ENCODE measurements at regions of chr10 and their contacts with region 1.

Region 1: DNA sequence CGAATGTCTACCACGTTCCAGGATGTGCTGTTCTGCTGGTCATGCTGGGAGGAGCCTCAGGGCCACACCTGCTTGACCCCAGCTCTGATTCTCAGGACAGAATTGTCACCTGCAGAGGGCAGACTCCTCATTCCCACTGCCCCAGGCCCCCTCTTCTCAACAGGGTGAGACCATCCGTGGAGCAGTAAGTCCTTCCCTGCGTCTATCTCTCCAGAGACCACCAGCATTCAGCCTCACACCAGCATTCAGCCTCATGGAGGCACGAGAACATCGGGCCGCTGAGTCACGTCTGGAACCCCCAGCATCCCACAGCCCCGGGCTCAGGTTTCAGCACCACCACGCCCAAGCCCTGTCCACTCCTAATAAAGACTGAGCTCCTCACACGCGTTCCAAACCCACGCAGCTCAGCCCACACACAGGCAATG is 273.4 kb downstream of the DIP2C start:
- DNase-seq: no peak
- H3K4me3 ChIP-seq: no peak overlapping the region
- H3K27ac ChIP-seq: no peak overlapping the region
- H3K4me1 ChIP-seq: no peaks in the 10 kb centered on the region
- H3K27me3 ChIP-seq: no peaks in the 10 kb centered on the region
- CTCF ChIP-seq: peak; percentile 61 to 77 (median 77)
- EP300 ChIP-seq: no peak
- POLR2A ChIP-seq: no peak
- RAD21 ChIP-seq: peak; percentile 75 to 78

Region 2: GRCh38 chr10:397321-398075 is 18.6 kb before region 1 on chr10:
- CTCF ChIA-PET with region 1: interaction called, 11 read pairs
- POLR2A ChIA-PET with region 1: no interaction called
- DNase-seq: no peak
- H3K4me3 ChIP-seq: no peak overlapping the region
- H3K27ac ChIP-seq: no peak overlapping the region
- H3K4me1 ChIP-seq: peaks cover 0 to 11% (median 6%) of the 10 kb centered on the region in 4 experiments; a peak in 6 of 7 replicates
- H3K27me3 ChIP-seq: no peaks in the 10 kb centered on the region
- CTCF ChIP-seq: no peak
- EP300 ChIP-seq: no peak
- POLR2A ChIP-seq: no peak
- RAD21 ChIP-seq: no peak

Region 3: DNA sequence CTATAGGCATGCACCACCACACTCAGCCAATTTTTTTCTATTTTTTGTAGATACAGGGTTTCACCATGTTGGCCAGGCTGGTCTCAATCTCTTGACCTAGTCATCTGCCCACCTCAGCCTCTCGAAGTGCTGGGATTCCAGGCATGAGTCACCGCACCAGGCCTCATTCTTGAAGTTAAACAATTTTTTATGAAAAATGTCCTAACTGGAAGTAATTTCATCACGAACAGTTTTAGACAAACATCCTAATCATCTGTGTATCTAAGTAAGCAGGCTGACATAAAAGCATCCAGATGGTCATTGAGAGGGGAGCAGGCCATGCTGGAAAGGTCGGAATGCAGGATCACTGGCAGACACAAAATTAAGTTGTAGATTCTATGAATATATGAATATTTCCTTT is 11.8 kb before region 1 on chr10:
- CTCF ChIA-PET with region 1: interaction called, 11 read pairs
- POLR2A ChIA-PET with region 1: no interaction called
- DNase-seq: no peak
- H3K4me3 ChIP-seq: no peak overlapping the region
- H3K27ac ChIP-seq: no peak overlapping the region
- H3K4me1 ChIP-seq: no peaks in the 10 kb centered on the region
- H3K27me3 ChIP-seq: no peaks in the 10 kb centered on the region
- CTCF ChIP-seq: no peak
- EP300 ChIP-seq: no peak
- POLR2A ChIP-seq: no peak
- RAD21 ChIP-seq: no peak

Region 4: GRCh38 chr10:427761-428519 is 11.8 kb after region 1 on chr10:
- CTCF ChIA-PET with region 1: interaction called, 16 read pairs
- POLR2A ChIA-PET with region 1: no interaction called
- DNase-seq: no peak
- H3K4me3 ChIP-seq: no peak overlapping the region
- H3K27ac ChIP-seq: no peak overlapping the region
- H3K4me1 ChIP-seq: no peaks in the 10 kb centered on the region
- H3K27me3 ChIP-seq: no peaks in the 10 kb centered on the region
- CTCF ChIP-seq: no peak
- EP300 ChIP-seq: no peak
- POLR2A ChIP-seq: no peak
- RAD21 ChIP-seq: no peak

Region 5: GRCh38 chr10:436911-437665 is 21.0 kb after region 1 on chr10:
- CTCF ChIA-PET with region 1: interaction called, 14 read pairs
- POLR2A ChIA-PET with region 1: no interaction called
- DNase-seq: no peak
- H3K4me3 ChIP-seq: no peak overlapping the region
- H3K27ac ChIP-seq: no peak overlapping the region
- H3K4me1 ChIP-seq: no peaks in the 10 kb centered on the region
- H3K27me3 ChIP-seq: no peaks in the 10 kb centered on the region
- CTCF ChIP-seq: no peak
- EP300 ChIP-seq: no peak
- POLR2A ChIP-seq: no peak
- RAD21 ChIP-seq: no peak

Region 6: DNA sequence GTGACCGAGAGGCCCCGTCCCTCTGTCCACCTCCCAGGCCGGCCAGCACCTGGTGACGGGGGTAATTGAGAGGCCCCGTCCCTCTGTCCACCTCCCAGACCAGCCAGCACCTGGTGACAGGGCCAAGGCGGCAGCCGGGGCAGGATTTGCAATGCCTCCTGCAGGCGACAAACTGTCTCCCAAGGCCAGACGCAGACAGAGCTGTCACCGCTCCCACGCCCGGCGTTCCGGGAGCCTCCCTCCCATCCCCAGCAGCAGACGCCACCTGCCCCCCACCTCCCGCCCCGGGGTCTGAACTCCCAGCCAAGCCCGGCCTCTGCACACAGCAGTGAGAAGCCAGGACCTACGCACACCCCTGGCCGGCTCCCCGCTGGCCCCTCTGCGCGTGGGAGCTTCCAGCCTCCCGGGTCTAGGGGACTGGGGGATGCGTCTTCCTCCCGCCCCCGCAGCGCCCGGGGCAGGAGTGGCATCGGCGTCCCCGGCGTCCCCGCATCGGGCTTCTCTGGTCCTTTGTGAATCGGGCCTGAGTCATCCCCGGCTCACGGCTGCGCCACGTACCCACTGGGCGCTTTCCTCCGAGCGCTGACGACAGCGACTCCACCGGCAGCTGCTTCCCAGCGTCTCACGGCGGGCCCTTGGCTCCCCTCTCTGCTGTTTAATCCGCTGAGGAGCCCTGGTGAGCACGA is 368.4 kb after region 1 on chr10:
- CTCF ChIA-PET with region 1: interaction called, 12 read pairs
- POLR2A ChIA-PET with region 1: no interaction called
- DNase-seq: peak in 1 of 2 experiments; percentile 57
- H3K4me3 ChIP-seq: peak overlapping the region; percentile 23 to 58 (median 38)
- H3K27ac ChIP-seq: no peak overlapping the region
- H3K4me1 ChIP-seq: peaks cover 0 to 7% (median 1%) of the 10 kb centered on the region in 4 experiments; a peak in 3 of 7 replicates
- H3K27me3 ChIP-seq: peaks cover 2 to 18% (median 8%) of the 10 kb centered on the region in 4 experiments; a peak in 6 of 7 replicates
- CTCF ChIP-seq: peak in 1 of 3 experiments; percentile 6; a peak in 1 of 4 replicates
- EP300 ChIP-seq: no peak
- POLR2A ChIP-seq: no peak
- RAD21 ChIP-seq: peak in 1 of 2 experiments; percentile 23; a peak in 1 of 4 replicates